Posterior cingulate gyrus (tissue), 11 donors: ENCODE measurements at regions of chr3 and their contacts with region 1.

Region 1: GRCh38 chr3:132253262-132253878 is 63.8 kb upstream of the ACP3 start:
- DNase-seq: no peak

Region 2: DNA sequence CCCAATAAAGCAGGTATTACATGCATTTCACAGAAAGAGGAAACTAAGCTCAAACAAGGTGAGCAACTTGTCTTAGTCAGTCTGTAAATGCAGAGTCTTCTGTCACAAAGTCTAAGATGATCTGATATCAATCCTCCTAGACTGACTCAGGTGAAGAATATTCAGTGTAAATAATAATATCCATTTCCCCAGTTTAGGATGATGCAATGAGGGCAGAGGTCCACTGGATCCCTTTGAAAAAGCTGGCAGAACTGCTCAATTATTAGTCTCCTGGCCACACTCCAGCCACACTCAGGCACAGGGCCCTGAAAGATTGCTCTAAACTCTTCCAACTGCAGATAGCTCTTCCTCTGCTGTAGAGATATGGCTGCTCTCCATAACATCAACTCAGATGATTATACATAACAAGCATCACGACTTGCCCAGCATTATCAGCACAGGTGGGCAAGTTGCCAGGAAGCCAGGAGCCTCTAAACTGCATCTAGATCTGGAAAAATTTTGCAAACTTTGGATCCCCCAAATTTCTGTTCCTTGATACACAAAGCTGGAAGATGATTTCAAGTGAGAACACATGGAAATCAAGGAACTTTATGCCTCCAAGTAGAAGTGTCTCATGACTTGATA is 88.8 kb before region 1 on chr3:
- intact Hi-C with region 1: no loop called
- DNase-seq: peak in 2 of 10 donors; percentile 52 to 63

Region 3: DNA sequence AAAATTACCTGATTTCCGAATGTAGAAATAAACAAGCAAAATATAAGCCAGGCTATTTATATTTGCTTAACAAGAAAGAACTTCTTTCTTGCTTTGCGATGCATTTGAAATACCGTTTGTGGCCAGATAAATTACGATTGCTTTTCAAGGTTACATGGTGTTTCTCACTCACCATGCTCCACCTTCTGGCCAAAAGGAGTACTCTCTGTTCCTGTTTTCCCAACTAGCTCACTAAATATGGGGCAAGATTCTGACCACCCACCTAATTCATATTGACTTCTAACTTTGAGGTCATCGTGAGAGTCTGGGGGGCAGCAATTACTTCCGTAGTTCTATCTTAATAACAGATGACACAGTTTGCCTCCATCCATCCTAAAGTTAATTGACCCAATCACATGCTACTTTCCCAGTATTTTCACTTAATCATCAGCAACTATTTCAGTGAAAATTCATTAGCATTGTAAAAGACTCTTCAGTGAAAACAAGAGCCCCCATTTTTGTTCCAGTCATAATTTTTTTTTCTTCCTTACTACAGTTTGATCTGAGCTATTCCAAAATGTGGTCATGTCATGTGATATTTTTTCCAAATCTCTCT is 89.7 kb after region 1 on chr3:
- intact Hi-C with region 1: loop called (anchors 1 kb)
- DNase-seq: peak in 2 of 10 donors; percentile 11 to 30

Region 4: DNA sequence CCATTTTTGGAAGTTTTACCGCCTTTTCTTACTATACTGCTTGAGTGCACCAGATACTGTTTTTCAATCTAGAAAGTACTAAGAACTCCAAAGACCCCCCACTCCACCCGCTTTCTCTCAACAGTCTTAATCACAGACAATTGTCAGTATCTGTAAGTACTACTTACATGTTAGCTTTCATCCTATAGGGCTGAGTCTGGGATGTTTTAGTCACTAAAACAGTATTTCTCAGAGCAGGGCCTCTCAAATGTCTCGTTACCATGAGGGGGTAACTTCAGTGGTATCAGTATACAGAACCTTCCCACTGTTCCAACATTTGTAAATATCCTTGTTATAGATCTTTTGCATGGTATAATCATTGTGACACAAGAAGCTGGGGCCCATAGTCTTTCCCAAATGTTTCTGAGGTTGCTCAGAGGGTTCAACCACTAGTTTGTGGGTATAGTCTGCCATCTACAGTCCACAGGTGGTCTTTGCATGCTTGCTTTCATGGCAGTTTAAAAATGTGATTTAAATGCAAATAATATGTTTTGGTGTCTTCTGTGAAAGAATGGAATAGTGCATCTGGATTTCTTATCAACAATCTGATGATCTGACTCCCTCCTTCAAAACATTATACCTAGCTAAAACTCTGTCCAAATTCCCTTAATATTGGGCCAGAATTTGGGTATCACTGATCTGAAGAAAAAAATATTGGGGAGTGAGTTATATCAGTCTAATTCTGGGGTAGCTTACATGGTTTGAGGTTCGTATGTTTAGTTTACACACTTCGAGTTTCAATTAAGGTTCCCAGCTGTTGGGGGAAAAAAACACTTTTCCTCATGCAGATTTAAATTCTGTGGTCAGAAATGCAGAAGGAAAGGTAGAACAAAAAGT is 145.9 kb after region 1 on chr3:
- intact Hi-C with region 1: loop called (anchors 1 kb)
- DNase-seq: peak in 2 of 10 donors; percentile 18 to 22

Region 5: DNA sequence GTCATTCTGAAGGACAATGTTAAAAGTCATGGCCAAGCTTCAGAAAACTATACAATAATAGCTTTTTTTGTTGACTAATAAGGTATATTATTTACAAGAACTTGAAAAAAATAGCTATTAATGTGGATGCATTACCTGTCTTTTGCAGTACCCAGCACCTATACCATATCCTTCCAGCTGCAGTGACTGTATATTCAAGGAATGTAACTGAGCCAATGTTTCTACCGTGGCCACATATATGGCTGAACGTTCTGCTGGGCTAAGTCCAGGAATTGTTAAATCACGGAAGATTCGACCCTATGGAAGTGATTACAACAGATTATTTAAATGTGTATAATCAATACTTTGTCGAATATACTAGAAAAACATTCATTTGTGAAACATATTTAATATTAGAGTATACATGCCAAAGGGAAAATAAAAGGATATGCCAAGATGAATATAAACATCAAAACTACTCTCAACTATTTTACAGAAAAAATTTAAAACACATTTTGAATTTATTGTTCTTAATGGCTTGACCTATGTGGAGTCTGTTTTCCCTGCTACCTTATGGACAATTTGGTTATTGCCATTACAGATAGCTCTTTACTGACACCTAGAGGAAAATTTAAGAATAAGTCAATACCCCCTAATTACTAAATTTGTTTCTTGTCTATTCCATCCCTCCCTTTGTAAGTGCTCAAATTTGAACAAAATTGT is 388.6 kb after region 1 on chr3:
- intact Hi-C with region 1: loop called (anchors 2 kb)
- DNase-seq: no peak

Region 6: DNA sequence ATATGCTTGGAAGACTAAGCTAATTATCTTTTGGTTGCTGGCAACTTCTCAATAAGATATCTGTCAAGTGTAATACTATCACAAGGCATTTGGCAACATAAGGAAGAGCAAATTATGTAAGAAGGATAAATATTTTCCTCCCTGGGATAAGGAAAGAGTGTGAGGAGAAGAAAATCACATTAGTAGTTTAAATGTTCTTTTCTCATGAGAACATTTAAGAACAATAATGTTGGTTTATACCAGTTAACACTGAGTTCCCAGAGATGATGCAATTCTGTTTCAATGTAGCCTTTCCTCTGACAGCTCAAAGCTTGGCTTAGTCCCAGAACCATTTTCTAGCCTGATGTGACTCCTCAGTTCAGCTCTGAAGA is 534.9 kb after region 1 on chr3:
- intact Hi-C with region 1: no loop called
- DNase-seq: peak in 1 of 10 donors; percentile 2